ENCODE measurements at regions of chr7 and their contacts with region 1.

Region 1: GRCh38 chr7:101138213-101138870 is 11.4 kb downstream of the SERPINE1 start:
- DNase-seq: peak; percentile 79
- ATAC-seq: peak; percentile 97
- H3K4me3 ChIP-seq: 0 out of 2 replicates have a peak overlapping the region, but pooled peaks have one; percentile 39
- H3K27ac ChIP-seq: no peak overlapping the region
- H3K4me1 ChIP-seq: peaks cover 3% of the 10 kb centered on the region
- H3K27me3 ChIP-seq: peaks cover 0 to 2% of the 10 kb centered on the region in 2 experiments; a peak in 1 of 4 replicates
- CTCF ChIP-seq: peak; percentile 55 to 83 (median 57)
- EP300 ChIP-seq: peak in 1 of 2 experiments; percentile 76; a peak in 1 of 4 replicates
- POLR2A ChIP-seq: no peak
- RAD21 ChIP-seq: peak; percentile 44

Region 2: DNA sequence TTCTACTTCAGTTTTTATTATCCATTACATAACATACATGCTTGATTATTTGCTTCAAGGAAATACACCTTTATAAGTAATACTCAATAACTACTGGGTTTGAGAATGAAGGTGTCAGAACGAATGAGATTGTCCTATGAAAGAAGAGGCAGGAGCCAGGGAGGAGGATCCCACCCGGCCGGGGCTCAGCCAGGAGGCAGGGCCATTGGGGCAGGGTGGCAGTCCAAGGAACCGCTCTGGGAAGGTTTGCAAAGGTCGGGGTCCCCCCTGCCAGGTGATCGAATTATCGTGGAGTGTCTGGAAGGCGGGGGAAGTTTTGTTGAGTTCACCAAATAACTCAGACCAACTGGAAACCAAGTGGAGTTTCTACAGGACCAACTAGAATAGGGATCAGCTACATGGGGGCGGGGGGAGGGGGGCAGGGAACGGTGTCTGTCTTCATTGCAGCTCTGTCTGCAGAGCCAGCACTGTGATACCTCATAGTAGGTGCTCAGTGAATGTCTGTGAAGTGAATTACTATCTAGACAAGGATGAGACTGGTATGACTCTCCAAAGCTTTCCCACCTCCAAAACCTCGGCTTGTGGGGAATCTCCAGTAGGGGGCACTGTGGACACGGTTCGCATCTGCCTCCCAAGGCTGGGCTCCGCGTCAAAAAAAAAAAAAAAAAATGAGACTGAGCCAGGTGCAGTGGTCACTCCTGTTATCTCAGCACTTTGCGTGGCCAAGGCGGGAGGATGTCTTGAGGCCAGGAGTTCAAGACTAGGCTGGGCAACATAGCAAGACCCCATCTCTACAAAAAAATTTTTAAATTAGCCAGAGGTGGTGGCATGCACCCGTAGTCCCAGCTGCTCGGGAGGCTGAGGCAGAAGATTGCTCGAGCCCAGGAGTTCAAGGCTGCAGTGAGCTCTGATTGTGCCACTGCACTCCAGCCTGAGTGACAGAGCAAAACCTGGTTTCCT is 43.6 kb before region 1 on chr7:
- CTCF ChIA-PET with region 1: interaction called, 10 read pairs
- POLR2A ChIA-PET with region 1: interaction called, 3 read pairs
- RAD21 ChIA-PET with region 1: interaction called, 4 read pairs
- SMC1A ChIA-PET with region 1: interaction called, 6 read pairs
- in situ Hi-C with region 1: no loop called
- intact Hi-C with region 1: loop called (anchors 5 kb)
- DNase-seq: no peak
- ATAC-seq: peak; percentile 64
- H3K4me3 ChIP-seq: no peak overlapping the region
- H3K27ac ChIP-seq: no peak overlapping the region
- H3K4me1 ChIP-seq: no peaks in the 10 kb centered on the region
- H3K27me3 ChIP-seq: no peaks in the 10 kb centered on the region
- CTCF ChIP-seq: peak; percentile 26 to 54 (median 49); a peak in 5 of 6 replicates
- EP300 ChIP-seq: no peak
- POLR2A ChIP-seq: peak; percentile 21; the same call in 1 of the 2 replicates
- RAD21 ChIP-seq: peak; percentile 31; the same call in 1 of the 2 replicates

Region 3: DNA sequence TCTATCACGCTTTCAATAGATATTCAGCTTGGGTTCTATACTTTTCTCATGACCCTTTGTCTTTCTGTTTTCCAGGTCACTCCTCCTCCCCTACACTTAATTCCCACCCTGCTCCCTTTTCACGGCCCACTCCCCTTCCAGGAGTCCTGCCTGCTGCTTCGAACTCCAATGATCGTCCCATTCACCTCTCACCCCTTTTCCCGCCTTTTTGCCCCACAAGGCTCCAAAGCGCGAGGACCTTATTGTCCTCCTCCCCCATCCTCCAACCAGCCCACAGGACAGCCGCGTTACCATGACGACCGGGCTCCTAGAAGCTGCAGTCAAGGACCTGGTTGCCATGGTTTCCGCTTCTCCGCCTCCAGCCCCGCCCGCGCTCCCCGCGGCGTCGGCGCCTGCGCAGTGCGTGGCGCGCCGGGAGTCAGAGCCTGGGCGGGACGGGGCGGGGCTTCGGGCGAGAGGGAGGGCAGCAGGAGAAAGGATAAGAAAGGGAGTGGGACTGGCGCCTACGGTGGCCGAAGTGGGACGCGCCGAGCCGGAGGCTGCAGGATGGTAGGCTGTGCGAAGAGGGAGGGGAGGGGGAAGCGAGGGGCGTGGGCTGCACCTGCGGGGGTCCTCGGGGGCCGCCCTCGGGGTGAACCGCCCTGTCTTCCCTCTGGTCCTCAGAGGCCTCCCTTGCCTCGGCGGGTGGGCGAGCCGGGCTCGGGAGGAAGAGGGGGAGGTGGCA is 15.8 kb after region 1 on chr7 and contains the start of gene AP1S1:
- CTCF ChIA-PET with region 1: interaction called, 112 read pairs
- POLR2A ChIA-PET with region 1: interaction called, 5 read pairs
- RAD21 ChIA-PET with region 1: interaction called, 20 read pairs
- SMC1A ChIA-PET with region 1: interaction called, 3 read pairs
- in situ Hi-C with region 1: no loop called
- intact Hi-C with region 1: no loop called
- DNase-seq: peak; percentile 76
- ATAC-seq: peak; percentile 96
- H3K4me3 ChIP-seq: peak within 1 kb of the TSS; percentile 85
- H3K27ac ChIP-seq: peak within 1 kb of the TSS; percentile 65
- H3K4me1 ChIP-seq: peaks cover 3% of the 10 kb centered on the region; the same call in 1 of the 2 replicates
- H3K27me3 ChIP-seq: no peaks in the 10 kb centered on the region
- CTCF ChIP-seq: no peak
- EP300 ChIP-seq: no peak
- POLR2A ChIP-seq: peak; percentile 62
- RAD21 ChIP-seq: no peak
- polyA plus RNA-seq, gene AP1S1: 2.5 to 7.9 TPM

Region 4: GRCh38 chr7:101185258-101185839 is 47.0 kb after region 1 on chr7:
- CTCF ChIA-PET with region 1: interaction called, 248 read pairs
- POLR2A ChIA-PET with region 1: interaction called, 10 read pairs
- RAD21 ChIA-PET with region 1: interaction called, 134 read pairs
- SMC1A ChIA-PET with region 1: interaction called, 71 read pairs
- in situ Hi-C with region 1: no loop called
- intact Hi-C with region 1: no loop called
- DNase-seq: no peak
- ATAC-seq: no peak
- H3K4me3 ChIP-seq: no peak overlapping the region
- H3K27ac ChIP-seq: no peak overlapping the region
- H3K4me1 ChIP-seq: no peaks in the 10 kb centered on the region
- H3K27me3 ChIP-seq: peaks cover 0 to 2% of the 10 kb centered on the region in 2 experiments; a peak in 2 of 4 replicates
- CTCF ChIP-seq: no peak
- EP300 ChIP-seq: no peak
- POLR2A ChIP-seq: no peak
- RAD21 ChIP-seq: no peak

Region 5: DNA sequence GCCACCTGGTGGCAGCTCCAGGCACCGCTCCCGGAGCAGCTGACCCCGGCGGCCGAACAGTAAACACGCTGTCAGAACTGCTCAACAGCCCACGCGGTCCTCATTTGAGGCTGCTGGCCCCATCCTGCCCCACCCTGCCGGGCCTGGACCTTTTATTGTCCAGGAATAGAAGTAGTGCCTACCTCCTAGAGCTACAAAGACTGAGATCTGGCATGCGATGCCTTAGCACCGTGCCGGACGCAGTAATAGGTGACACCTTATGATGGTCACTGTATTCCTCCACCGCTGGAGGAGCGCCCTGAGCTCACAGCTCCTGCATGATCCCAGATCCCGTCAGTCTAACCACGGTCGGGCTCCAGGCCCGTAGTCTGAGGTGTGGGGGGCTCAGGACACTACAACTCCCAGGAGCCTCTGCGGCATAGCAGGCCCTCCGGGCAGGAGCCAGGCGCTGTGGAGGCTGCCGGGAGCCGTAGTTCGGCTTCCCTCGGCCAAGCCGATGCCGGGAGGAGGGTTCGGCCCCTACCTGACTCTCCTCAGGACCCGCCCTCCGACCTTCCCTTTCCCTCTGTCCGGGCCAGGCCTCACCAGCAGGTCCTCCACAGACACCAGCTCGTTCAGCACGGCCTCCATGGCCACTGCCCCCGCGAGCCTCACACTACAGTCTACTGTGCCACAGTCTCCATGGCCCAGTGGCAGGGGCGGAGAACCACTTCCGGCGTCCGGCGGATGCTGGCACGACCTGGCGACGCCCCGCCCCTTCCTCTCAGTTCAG is 106.2 kb after region 1 on chr7 and contains the start of gene FIS1:
- CTCF ChIA-PET with region 1: interaction called, 74 read pairs
- POLR2A ChIA-PET with region 1: no interaction called
- RAD21 ChIA-PET with region 1: interaction called, 26 read pairs
- SMC1A ChIA-PET with region 1: interaction called, 20 read pairs
- in situ Hi-C with region 1: no loop called
- intact Hi-C with region 1: no loop called
- DNase-seq: peak; percentile 68
- ATAC-seq: peak; percentile 98
- H3K4me3 ChIP-seq: peak within 1 kb of the TSS; percentile 84
- H3K27ac ChIP-seq: peak within 1 kb of the TSS; percentile 89
- H3K4me1 ChIP-seq: peaks cover 6% of the 10 kb centered on the region
- H3K27me3 ChIP-seq: no peaks in the 10 kb centered on the region
- CTCF ChIP-seq: peak; percentile 79 to 95 (median 89); a peak in 5 of 6 replicates
- EP300 ChIP-seq: 0 out of 4 replicates have a peak, but pooled peaks of 1 of the 2 experiments have one; percentile 14
- POLR2A ChIP-seq: peak; percentile 94
- RAD21 ChIP-seq: peak; percentile 39; the same call in 1 of the 2 replicates
- polyA plus RNA-seq, gene FIS1: 83.4 to 88.5 TPM

Measured in GM12878 (cell line).